Activated CD8-positive, alpha-beta memory T cell treated with anti-CD3 and anti-CD28 coated beads, Interleukin-2, amount 10 ng/mL, durations not matched to agents 7 days and 5 days (primary cell): ENCODE measurements at regions of chr20 and their contacts with region 1.

Region 1: GRCh38 chr20:16821211-16822089 is 73.3 kb downstream of the OTOR start:
- DNase-seq: no peak
- ATAC-seq: peak; percentile 39
- H3K4me3 Mint-ChIP-seq: no peak overlapping the region
- H3K27ac Mint-ChIP-seq: no peak overlapping the region
- H3K4me1 Mint-ChIP-seq: no peaks in the 10 kb centered on the region
- H3K27me3 Mint-ChIP-seq: peaks cover 13% of the 10 kb centered on the region

Region 2: DNA sequence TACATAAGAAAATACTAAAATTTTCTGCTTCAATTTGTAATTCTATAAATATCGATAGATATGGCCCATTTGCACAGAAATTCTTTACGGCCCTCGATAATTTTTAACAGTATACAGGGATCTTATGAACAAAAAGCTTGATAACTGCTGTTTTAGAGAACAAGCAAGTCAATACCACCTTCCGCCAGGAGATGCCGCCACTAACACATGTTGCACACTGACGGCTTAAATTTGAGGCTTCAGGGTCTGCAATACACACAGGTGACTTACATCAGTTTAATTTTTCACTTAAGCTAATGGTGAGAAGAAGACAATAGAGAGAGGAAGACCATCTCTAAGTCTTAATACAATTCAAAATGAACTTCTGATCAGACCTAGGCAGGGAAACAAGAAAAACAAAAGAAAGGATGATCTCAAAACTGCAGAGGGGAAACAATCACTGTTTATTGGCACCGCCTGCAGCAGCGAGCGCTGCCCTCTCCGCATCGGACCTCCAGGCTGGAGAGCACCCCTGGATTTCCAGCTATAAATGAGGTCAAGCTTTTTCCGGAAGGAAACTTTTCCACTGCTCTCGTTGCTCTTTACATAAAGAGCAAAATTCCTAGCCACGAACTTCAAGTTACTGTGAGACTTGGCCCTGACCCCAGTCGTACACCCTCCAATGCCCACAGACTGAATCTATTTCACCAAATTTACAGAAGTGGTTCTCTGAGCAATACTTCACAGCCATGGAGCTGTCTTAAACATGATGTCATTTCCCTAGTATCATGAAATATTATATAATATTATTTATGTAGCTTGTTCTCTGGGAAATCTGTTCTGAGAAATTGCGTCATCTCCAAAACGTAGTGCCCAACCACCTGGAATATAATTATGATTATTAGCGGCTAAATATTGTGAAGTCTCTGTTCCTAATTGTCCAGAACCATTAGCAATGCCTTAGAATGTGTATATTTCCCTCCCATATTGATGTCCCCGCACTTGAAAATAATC is 19.2 kb before region 1 on chr20:
- CTCF ChIA-PET with region 1: interaction called, 30 read pairs
- DNase-seq: peak; percentile 71
- ATAC-seq: no peak
- H3K4me3 Mint-ChIP-seq: no peak overlapping the region
- H3K27ac Mint-ChIP-seq: no peak overlapping the region
- H3K4me1 Mint-ChIP-seq: no peaks in the 10 kb centered on the region
- H3K27me3 Mint-ChIP-seq: peaks cover 37% of the 10 kb centered on the region

Region 3: GRCh38 chr20:16810216-16810615 is 11.2 kb before region 1 on chr20:
- CTCF ChIA-PET with region 1: interaction called, 30 read pairs
- DNase-seq: no peak
- ATAC-seq: no peak
- H3K4me3 Mint-ChIP-seq: no peak overlapping the region
- H3K27ac Mint-ChIP-seq: no peak overlapping the region
- H3K4me1 Mint-ChIP-seq: no peaks in the 10 kb centered on the region
- H3K27me3 Mint-ChIP-seq: peaks cover 20% of the 10 kb centered on the region